ENCODE measurements at regions of chr6 and their contacts with region 1.

Region 1: GRCh38 chr6:108565893-108566292 is 5.2 kb downstream of the FOXO3 start:
- DNase-seq: peak; percentile 83
- ATAC-seq: peak; percentile 51
- H3K4me3 ChIP-seq: peak overlapping the region in 4 of 5 experiments; percentile 20 to 55 (median 30)
- H3K4me3 Mint-ChIP-seq: peak overlapping the region; percentile 69
- H3K27ac ChIP-seq: peak overlapping the region; percentile 74 to 85
- H3K27ac Mint-ChIP-seq: peak overlapping the region; percentile 72
- H3K4me1 ChIP-seq: peaks cover 43 to 51% of the 10 kb centered on the region in 2 donors
- H3K4me1 Mint-ChIP-seq: peaks cover 64% of the 10 kb centered on the region
- H3K27me3 ChIP-seq: no peaks in the 10 kb centered on the region
- H3K27me3 Mint-ChIP-seq: no peaks in the 10 kb centered on the region
- CTCF ChIP-seq: no peak

Region 2: DNA sequence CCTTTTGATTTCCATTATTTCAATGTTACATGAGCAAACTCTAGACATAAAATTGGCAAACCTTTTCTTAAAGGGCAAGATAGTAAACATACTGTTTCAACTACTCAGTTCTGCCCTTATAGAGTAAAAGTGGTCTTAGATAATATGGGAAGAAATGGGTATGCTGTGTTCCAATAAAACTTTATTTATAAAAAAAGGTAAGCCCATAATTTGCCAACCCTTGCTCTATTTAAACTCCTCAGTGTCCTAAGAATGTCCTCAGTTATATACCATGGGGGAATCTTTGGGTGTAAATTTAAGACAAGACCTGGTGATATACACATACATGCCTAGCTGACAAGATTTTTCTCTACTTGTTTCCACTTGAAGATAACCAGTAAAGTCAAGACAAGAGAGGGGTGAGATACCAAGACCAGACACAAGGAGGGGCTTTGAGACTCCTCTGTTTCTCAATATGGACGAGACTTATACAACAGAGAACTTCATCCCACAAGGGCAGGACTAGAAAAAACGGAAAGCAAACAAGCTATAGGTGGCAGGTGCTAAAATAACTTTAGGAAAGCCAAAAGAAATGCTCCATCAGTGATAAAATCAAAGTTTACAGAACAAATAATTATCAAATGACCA is 315.5 kb before region 1 on chr6:
- CTCF ChIA-PET with region 1: no interaction called
- POLR2A ChIA-PET with region 1: no interaction called
- intact Hi-C with region 1: no loop called
- DNase-seq: peak; percentile 46
- ATAC-seq: peak; percentile 36
- H3K4me3 ChIP-seq: no peak overlapping the region
- H3K4me3 Mint-ChIP-seq: peak overlapping the region; percentile 12
- H3K27ac ChIP-seq: no peak overlapping the region
- H3K27ac Mint-ChIP-seq: no peak overlapping the region
- H3K4me1 ChIP-seq: peaks cover 40 to 53% of the 10 kb centered on the region in 2 donors
- H3K4me1 Mint-ChIP-seq: peaks cover 77% of the 10 kb centered on the region
- H3K27me3 ChIP-seq: no peaks in the 10 kb centered on the region
- H3K27me3 Mint-ChIP-seq: no peaks in the 10 kb centered on the region
- CTCF ChIP-seq: peak; percentile 55

Region 3: DNA sequence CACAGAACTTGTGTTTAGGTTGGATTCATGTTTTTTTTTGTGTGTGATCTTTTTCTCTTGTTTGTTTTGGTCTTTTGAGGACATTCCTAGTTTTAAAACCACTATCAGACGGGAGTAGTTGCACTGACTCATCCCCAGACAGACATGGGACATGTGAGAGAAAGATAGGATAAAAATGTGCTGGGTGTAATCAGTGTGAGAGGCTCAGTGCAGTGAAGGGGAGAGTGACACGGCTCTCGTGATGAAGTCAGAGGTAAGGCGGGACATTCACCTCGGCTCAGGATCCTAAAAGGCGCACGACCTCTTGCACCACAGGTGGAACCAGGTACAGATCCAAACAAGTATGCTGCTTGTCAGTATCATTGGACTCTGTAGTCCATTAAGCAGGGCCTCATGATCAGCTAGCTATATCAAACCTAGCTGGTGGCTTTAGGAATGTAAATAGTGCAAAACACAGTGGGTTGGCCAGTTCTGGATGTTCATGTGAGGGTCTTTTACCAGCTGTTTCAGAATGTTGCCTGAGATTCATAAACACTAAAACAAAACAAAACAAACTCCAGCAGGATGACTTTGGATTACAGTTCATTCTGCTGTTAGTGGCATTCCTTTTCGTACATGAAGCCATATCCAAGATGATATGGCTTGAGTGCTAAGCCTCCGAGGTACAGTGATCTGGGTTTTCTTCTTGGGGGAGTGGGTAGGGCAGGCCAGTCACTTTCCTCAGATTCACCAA is 12.9 kb after region 1 on chr6:
- CTCF ChIA-PET with region 1: interaction called, 4 read pairs
- POLR2A ChIA-PET with region 1: no interaction called
- intact Hi-C with region 1: loop called (anchors 2 kb)
- DNase-seq: no peak
- ATAC-seq: no peak
- H3K4me3 ChIP-seq: no peak overlapping the region
- H3K4me3 Mint-ChIP-seq: no peak overlapping the region
- H3K27ac ChIP-seq: no peak overlapping the region
- H3K27ac Mint-ChIP-seq: no peak overlapping the region
- H3K4me1 ChIP-seq: peaks cover 18 to 25% of the 10 kb centered on the region in 2 donors
- H3K4me1 Mint-ChIP-seq: peaks cover 70% of the 10 kb centered on the region
- H3K27me3 ChIP-seq: no peaks in the 10 kb centered on the region
- H3K27me3 Mint-ChIP-seq: no peaks in the 10 kb centered on the region
- CTCF ChIP-seq: no peak

Region 4: DNA sequence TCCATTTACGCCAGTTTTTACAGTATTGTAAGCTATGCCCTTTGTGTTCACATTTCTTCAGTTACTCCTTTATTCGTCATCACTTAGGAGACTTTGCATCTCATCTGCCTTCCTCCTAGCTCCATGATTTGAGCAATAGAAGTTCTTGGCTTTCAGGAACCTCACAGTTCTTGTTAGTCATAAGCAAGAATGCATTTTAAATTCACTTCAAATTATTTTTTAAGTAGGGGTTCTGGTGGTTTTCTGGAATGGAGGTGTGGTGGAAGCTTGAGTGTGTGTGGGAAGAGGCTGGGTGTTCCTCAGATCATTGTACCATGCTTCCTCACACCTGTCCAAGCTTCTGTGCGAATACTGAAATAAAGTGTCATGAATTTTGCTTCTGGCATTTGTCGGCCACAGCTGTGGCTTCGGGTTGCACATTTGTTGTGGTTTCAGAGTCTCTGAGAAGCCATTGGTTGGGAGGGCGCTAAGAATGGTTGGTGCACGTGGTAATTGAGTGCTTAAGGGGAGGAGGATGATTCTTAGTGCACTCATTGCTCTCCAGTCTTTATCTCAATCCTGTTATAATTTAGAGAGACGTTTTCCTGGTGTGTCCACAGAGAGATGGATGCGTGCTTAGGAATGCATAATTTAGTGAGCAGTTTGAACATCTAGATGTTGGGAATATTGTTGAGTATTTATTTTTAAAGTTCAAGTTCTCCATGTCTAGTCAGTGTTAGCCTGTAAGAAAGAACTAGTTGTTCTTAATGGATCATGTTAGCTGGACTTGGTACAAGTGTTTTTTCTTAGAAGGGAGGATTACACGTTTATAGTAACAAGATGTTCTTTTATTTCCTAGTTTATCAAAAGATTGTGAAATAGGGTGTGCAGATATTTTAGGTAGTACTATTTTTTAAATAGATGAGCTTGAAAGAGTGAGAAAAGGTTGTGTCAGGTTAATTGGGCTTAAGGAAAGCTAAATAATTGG is 26.8 kb after region 1 on chr6:
- CTCF ChIA-PET with region 1: interaction called, 3 read pairs
- POLR2A ChIA-PET with region 1: interaction called, 4 read pairs
- intact Hi-C with region 1: loop called (anchors 1 kb)
- DNase-seq: peak; percentile 70
- ATAC-seq: peak; percentile 80
- H3K4me3 ChIP-seq: no peak overlapping the region
- H3K4me3 Mint-ChIP-seq: peak overlapping the region; percentile 28
- H3K27ac ChIP-seq: peak overlapping the region; percentile 40 to 46
- H3K27ac Mint-ChIP-seq: peak overlapping the region; percentile 74
- H3K4me1 ChIP-seq: peaks cover 49 to 62% of the 10 kb centered on the region in 2 donors
- H3K4me1 Mint-ChIP-seq: peaks cover 82% of the 10 kb centered on the region
- H3K27me3 ChIP-seq: no peaks in the 10 kb centered on the region
- H3K27me3 Mint-ChIP-seq: no peaks in the 10 kb centered on the region
- CTCF ChIP-seq: no peak

Region 5: DNA sequence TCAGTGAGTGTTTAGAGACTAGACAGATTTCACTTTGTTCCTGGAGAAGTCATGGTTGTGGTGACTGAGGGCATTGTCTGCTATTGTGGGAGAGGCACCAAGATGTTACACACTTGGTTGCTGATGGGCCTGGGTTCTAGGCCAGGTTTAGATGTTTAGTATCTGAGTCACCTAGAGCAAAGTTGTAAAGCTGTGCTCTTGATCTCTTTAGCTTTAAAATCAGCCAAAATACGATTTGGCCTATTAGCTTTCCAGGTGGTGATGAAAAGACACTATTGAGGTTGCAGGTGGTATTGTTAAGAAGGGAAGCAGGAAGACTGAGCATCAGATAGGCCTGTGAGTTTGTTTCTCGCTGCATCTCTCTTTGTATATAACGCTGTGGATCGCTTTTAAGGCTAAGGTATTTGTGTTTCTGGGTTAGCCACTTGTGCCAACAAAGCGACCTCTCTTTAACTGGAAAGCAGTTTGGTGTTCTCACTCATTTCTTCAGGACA is 43.4 kb after region 1 on chr6:
- CTCF ChIA-PET with region 1: no interaction called
- POLR2A ChIA-PET with region 1: no interaction called
- intact Hi-C with region 1: no loop called
- DNase-seq: no peak
- ATAC-seq: no peak
- H3K4me3 ChIP-seq: no peak overlapping the region
- H3K4me3 Mint-ChIP-seq: no peak overlapping the region
- H3K27ac ChIP-seq: no peak overlapping the region
- H3K27ac Mint-ChIP-seq: no peak overlapping the region
- H3K4me1 ChIP-seq: no peaks in the 10 kb centered on the region
- H3K4me1 Mint-ChIP-seq: peaks cover 26% of the 10 kb centered on the region
- H3K27me3 ChIP-seq: no peaks in the 10 kb centered on the region
- H3K27me3 Mint-ChIP-seq: no peaks in the 10 kb centered on the region
- CTCF ChIP-seq: no peak

Region 6: DNA sequence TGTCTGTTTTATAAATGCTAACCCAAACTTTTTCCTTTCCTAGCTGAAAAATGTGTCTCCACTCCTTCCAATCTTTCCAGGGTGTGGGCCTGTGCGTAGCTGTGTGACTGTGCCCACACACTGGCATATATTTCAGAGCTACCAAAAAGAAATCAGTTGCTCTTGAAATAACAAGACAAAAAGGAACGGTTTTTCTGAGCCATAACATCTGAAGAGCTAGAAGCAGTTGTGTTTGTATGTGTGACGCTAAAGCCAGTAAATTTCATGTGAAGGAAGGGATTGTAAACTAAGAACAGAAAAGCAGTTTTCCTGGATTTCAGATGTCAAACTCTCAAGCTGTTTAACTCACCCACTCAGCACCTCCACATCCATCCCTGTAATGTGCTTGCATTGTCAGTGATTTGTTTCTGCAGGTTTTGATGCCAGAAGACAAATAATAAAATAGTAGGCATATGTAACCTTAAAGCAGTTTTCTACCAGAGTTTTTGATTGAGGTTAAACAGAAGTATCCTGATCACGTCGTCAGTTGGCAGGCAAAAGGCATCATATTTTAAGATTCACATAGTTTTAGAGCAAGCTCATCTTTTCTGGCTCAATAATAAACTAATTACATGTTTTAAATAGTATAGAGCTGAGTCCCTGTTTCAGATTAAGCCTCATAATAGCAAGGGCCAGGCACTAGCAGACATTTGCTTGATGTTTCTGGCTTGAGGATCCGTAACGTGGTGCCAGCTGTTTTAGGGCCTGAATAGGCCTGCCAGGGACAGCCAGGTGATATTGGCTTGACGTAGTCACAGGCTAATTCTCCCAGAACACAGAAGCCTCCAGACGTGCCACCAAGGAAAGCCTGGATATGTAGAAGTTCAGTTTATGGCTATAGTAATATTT is 85.7 kb after region 1 on chr6:
- CTCF ChIA-PET with region 1: no interaction called
- POLR2A ChIA-PET with region 1: no interaction called
- intact Hi-C with region 1: loop called (anchors 5 kb)
- DNase-seq: no peak
- ATAC-seq: no peak
- H3K4me3 ChIP-seq: no peak overlapping the region
- H3K4me3 Mint-ChIP-seq: no peak overlapping the region
- H3K27ac ChIP-seq: no peak overlapping the region
- H3K27ac Mint-ChIP-seq: no peak overlapping the region
- H3K4me1 ChIP-seq: peaks cover 4 to 11% of the 10 kb centered on the region in 2 donors
- H3K4me1 Mint-ChIP-seq: peaks cover 35% of the 10 kb centered on the region
- H3K27me3 ChIP-seq: no peaks in the 10 kb centered on the region
- H3K27me3 Mint-ChIP-seq: no peaks in the 10 kb centered on the region
- CTCF ChIP-seq: no peak

Region 7: GRCh38 chr6:108689247-108690161 is 123.6 kb after region 1 on chr6:
- CTCF ChIA-PET with region 1: no interaction called
- POLR2A ChIA-PET with region 1: no interaction called
- intact Hi-C with region 1: no loop called
- DNase-seq: no peak
- ATAC-seq: no peak
- H3K4me3 ChIP-seq: no peak overlapping the region
- H3K4me3 Mint-ChIP-seq: no peak overlapping the region
- H3K27ac ChIP-seq: no peak overlapping the region
- H3K27ac Mint-ChIP-seq: no peak overlapping the region
- H3K4me1 ChIP-seq: no peaks in the 10 kb centered on the region
- H3K4me1 Mint-ChIP-seq: no peaks in the 10 kb centered on the region
- H3K27me3 ChIP-seq: no peaks in the 10 kb centered on the region
- H3K27me3 Mint-ChIP-seq: no peaks in the 10 kb centered on the region
- CTCF ChIP-seq: no peak

Region 8: DNA sequence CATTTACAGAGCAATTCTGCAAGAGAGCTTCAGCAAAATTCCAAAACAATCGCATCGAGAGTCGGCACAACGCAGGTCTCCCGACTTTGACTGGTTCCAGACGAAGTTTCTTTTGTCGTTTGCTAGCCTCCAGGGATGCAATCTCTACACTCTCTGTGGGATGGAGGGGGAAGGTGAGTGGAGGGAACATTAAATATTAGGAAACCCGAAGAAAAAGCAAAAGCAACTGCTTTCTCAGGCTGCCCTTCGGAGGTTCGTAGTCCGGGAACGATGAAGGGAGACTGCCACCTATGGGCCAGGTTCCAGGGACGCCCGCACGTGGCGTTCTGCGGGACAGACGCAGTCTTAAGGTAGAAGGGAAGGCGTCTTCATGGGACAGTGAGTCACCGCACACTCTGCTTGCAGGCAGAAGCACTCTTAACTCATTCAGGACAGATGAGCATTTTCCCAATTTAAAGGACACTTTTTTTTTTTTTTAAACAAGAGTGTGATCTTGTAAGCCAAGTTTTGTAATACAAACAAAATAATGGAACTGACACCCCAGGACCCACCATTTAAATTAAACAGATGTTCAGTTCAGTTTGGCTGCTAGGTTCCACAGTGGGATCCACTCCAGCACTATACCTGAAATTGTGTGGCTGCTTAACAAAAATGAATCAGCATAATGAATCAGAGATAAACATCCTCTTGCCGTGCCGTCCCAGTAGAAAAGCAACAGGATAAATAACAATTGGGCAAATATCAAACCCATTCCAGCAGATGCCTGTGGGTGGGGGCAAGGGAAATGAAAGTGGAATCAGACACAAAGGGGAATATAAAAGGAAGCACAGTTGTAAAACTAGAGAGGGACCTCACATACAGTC is 216.5 kb after region 1 on chr6:
- CTCF ChIA-PET with region 1: interaction called, 21 read pairs
- POLR2A ChIA-PET with region 1: interaction called, 4 read pairs
- intact Hi-C with region 1: loop called (anchors 2 kb)
- DNase-seq: peak; percentile 84
- ATAC-seq: peak; percentile 96
- H3K4me3 ChIP-seq: peak overlapping the region; percentile 43 to 78 (median 59)
- H3K4me3 Mint-ChIP-seq: peak overlapping the region; percentile 81
- H3K27ac ChIP-seq: no peak overlapping the region
- H3K27ac Mint-ChIP-seq: no peak overlapping the region
- H3K4me1 ChIP-seq: peaks cover 23 to 31% of the 10 kb centered on the region in 2 donors
- H3K4me1 Mint-ChIP-seq: peaks cover 25% of the 10 kb centered on the region
- H3K27me3 ChIP-seq: peaks cover 0 to 20% (median 8%) of the 10 kb centered on the region in 4 experiments
- H3K27me3 Mint-ChIP-seq: peaks cover 27% of the 10 kb centered on the region
- CTCF ChIP-seq: peak; percentile 84

Region 9: DNA sequence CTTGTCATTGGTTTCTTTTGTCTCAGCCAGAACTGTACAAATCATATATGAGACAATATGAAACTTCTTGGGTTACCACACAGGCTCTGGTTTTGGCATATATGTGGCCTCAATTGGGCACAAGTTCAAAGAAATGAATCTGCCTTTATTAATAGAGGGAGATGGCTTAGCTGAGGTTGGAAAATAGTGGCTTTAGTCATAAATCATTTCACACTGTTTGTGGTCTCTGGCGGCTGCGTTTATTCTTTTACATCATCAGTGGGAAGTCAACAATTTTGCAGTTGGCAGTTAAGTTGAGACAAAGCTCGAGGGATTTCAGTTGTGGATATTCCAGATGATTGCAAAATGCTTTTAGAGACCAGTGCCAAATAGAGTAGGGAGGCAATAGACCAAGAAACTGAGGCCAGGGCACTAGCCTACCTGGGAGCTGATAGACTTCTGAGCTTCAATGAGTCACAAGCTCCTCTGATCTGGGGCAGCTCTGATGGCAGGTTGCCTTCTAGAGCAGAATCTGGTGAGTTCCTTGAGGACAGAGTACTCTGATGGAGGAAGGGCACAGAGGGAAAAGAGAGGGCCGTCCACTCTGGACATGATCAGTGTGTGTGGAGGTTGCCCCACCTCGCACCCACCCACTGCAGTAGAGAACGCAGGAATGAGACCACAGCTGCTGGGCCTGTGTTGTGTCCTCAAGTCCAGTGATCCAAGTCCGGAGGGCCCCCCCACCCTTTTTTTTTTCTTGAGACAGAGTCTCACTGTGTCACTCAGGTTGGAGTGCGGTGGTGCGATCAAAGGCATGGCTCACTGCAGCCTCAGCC is 355.9 kb after region 1 on chr6:
- CTCF ChIA-PET with region 1: no interaction called
- POLR2A ChIA-PET with region 1: no interaction called
- intact Hi-C with region 1: no loop called
- DNase-seq: no peak
- ATAC-seq: no peak
- H3K4me3 ChIP-seq: no peak overlapping the region
- H3K4me3 Mint-ChIP-seq: no peak overlapping the region
- H3K27ac ChIP-seq: no peak overlapping the region
- H3K27ac Mint-ChIP-seq: no peak overlapping the region
- H3K4me1 ChIP-seq: peaks cover 6 to 13% of the 10 kb centered on the region in 2 donors
- H3K4me1 Mint-ChIP-seq: peaks cover 8% of the 10 kb centered on the region
- H3K27me3 ChIP-seq: no peaks in the 10 kb centered on the region
- H3K27me3 Mint-ChIP-seq: no peaks in the 10 kb centered on the region
- CTCF ChIP-seq: no peak

Region 10: GRCh38 chr6:109440331-109441068 is 874.6 kb after region 1 on chr6 and contains the starts of genes PPIL6 and SMPD2:
- CTCF ChIA-PET with region 1: no interaction called
- POLR2A ChIA-PET with region 1: no interaction called
- intact Hi-C with region 1: loop called (anchors 2 kb)
- DNase-seq: peak; percentile 94
- ATAC-seq: peak; percentile 87
- H3K4me3 ChIP-seq: peak within 1 kb of the TSS; percentile 0 to 93 (median 90)
- H3K4me3 Mint-ChIP-seq: peak within 1 kb of the TSS; percentile 97
- H3K27ac ChIP-seq: peak within 1 kb of the TSS; percentile 79 to 98
- H3K27ac Mint-ChIP-seq: peak within 1 kb of the TSS; percentile 96
- H3K4me1 ChIP-seq: peaks cover 21 to 30% of the 10 kb centered on the region in 2 donors
- H3K4me1 Mint-ChIP-seq: peaks cover 31% of the 10 kb centered on the region
- H3K27me3 ChIP-seq: no peaks in the 10 kb centered on the region
- H3K27me3 Mint-ChIP-seq: no peaks in the 10 kb centered on the region
- CTCF ChIP-seq: no peak
- total RNA-seq, gene PPIL6: 0.53 and 1.8 TPM in 2 replicates
- total RNA-seq, gene SMPD2: 35.7 and 36.4 TPM in 2 replicates

Measured in B cell (primary cell).